ENCODE measurements at regions of chr12 and their contacts with region 1.

Region 1: GRCh38 chr12:49967042-49967776 is 5.5 kb downstream of the AQP5 start:
- DNase-seq: peak; percentile 87 to 97 (median 93)
- ATAC-seq: peak; percentile 85
- H3K4me3 ChIP-seq: peak overlapping the region; percentile 57
- H3K4me3 Mint-ChIP-seq: peak overlapping the region; percentile 70
- H3K27ac ChIP-seq: no peak overlapping the region
- H3K27ac Mint-ChIP-seq: no peak overlapping the region
- H3K4me1 ChIP-seq: peaks cover 17% of the 10 kb centered on the region
- H3K4me1 Mint-ChIP-seq: peaks cover 5% of the 10 kb centered on the region
- H3K27me3 ChIP-seq: peaks cover 22 to 46% of the 10 kb centered on the region in 2 experiments
- H3K27me3 Mint-ChIP-seq: peaks cover 47% of the 10 kb centered on the region
- CTCF ChIP-seq: peak; percentile 96

Region 2: DNA sequence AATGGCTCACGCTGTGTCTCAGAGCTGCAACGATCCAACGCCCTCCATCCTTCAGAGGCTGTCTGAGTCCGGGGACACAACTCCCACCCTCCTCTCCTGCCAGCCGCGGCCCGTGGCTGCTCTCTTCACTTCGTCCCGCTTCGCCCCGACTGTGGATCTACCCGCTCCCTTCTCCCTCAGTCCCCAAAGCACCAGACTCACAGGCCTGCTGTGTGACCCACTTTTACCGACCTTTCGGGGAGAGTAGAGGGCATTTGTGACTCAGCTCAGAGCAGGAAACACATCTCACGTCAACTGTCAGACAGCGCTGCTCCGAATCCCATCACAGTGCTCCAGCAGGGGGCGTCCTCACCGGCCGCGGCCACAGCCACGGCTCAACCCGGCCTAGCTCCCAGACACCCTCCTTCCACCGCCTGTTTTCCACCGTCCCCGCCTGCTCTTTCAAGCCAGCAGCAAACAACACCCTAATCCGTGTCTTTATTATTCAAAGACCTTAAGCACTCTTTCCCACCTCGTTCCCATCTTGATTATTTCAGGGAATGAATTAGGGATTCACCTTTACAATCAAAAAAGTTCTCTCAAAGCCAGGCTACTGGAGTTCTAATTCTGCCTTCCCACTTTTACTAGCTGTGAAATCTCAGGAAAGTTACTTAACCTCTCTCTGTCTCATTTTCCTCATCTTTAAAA is 21.7 kb before region 1 on chr12:
- CTCF ChIA-PET with region 1: interaction called, 32 read pairs
- POLR2A ChIA-PET with region 1: interaction called, 6 read pairs
- intact Hi-C with region 1: no loop called
- DNase-seq: peak; percentile 63 to 91 (median 78)
- ATAC-seq: peak; percentile 95
- H3K4me3 ChIP-seq: peak overlapping the region; percentile 47
- H3K4me3 Mint-ChIP-seq: peak overlapping the region; percentile 83
- H3K27ac ChIP-seq: peak overlapping the region in 1 of 2 donors; percentile 35
- H3K27ac Mint-ChIP-seq: peak overlapping the region; percentile 86
- H3K4me1 ChIP-seq: peaks cover 40% of the 10 kb centered on the region
- H3K4me1 Mint-ChIP-seq: peaks cover 30% of the 10 kb centered on the region
- H3K27me3 ChIP-seq: no peaks in the 10 kb centered on the region
- H3K27me3 Mint-ChIP-seq: peaks cover 5% of the 10 kb centered on the region
- CTCF ChIP-seq: peak; percentile 89

Region 3: DNA sequence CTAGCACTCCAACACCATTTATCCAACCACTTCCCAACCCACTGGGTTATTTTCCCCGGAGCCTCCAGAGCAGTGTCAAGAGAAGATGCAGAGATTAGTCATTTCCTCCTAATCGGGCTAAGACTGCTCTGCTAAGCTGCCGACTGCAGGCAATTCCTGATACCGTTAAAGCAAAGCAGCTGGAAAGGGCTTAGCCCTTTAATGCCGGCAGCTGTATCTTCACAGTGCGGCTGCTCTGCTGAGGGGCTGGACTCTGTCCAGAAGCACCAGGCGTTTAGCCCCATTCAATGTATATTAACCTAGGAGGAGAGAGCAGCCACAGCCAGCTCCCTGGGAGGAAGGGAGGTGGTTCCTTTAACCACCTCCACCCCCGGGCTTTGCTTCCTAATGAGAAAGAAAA is 16.7 kb after region 1 on chr12:
- CTCF ChIA-PET with region 1: interaction called, 14 read pairs
- POLR2A ChIA-PET with region 1: no interaction called
- intact Hi-C with region 1: no loop called
- DNase-seq: peak in 1 of 14 experiments; percentile 25
- ATAC-seq: no peak
- H3K4me3 ChIP-seq: no peak overlapping the region
- H3K4me3 Mint-ChIP-seq: no peak overlapping the region
- H3K27ac ChIP-seq: no peak overlapping the region
- H3K27ac Mint-ChIP-seq: no peak overlapping the region
- H3K4me1 ChIP-seq: no peaks in the 10 kb centered on the region
- H3K4me1 Mint-ChIP-seq: no peaks in the 10 kb centered on the region
- H3K27me3 ChIP-seq: no peaks in the 10 kb centered on the region
- H3K27me3 Mint-ChIP-seq: no peaks in the 10 kb centered on the region
- CTCF ChIP-seq: no peak

Region 4: DNA sequence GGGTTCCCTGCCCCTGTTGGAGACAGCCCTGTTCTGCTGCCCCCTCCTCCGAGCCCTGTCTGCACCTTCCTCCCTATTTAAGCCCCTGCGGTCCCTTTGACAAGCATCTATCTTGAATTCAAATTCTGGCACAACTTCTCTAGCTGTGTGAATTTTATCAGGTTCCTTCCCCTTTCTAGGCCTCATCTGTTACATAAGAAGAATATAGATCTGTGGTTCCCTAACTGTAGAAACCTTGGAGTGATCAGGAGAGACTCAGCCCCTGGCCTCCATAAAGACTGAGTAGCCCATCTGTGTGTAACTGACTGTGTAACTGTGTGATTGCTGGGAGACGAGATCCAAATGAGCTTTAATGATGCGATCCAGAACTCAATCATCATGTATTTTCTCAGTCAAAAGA is 71.1 kb after region 1 on chr12:
- CTCF ChIA-PET with region 1: interaction called, 10 read pairs
- POLR2A ChIA-PET with region 1: no interaction called
- intact Hi-C with region 1: no loop called
- DNase-seq: no peak
- ATAC-seq: no peak
- H3K4me3 ChIP-seq: no peak overlapping the region
- H3K4me3 Mint-ChIP-seq: no peak overlapping the region
- H3K27ac ChIP-seq: no peak overlapping the region
- H3K27ac Mint-ChIP-seq: no peak overlapping the region
- H3K4me1 ChIP-seq: no peaks in the 10 kb centered on the region
- H3K4me1 Mint-ChIP-seq: no peaks in the 10 kb centered on the region
- H3K27me3 ChIP-seq: peaks cover 0 to 3% of the 10 kb centered on the region in 2 experiments
- H3K27me3 Mint-ChIP-seq: peaks cover 23% of the 10 kb centered on the region
- CTCF ChIP-seq: no peak

Region 5: DNA sequence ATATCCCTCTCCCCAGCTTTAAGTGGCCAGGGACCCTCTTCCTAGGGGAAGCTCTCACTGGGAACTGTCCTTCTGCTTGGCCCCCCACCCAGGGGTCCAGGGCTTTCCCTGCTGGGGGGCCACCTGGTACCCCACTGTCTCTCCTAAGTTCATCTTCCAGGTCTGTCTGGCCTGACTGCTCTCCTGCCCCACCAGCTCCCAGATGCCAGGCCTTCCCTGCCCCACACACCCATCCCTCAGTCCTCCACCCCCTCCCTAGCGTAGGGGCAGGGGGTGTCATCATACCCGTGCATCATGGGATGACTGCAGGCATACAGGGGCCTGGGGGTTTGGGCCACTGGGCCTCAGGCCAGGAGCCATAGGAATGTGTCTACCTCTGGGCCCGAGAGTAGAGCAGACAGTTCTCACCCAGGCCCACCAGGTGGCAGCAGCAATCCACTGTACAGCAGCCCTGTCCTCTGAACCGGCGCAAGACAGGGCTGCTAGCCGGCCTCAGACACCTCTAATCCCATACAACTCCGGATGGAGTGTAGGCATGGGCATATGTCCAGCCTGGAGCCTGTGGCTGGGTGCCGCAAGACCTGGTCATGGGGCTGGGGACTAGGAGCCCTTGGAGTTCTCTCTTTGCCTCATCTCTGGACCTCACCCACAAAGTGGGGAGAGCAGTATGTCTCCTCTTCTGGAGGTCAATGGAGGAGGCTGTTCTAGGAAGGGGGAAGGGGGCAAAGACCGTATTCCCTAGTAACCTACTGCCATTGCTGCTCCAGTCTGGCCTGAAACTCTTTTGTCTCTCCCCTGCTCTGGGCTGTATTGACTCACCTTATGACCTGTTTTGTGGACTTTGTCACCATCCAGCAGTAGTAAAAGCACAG is 108.0 kb after region 1 on chr12:
- CTCF ChIA-PET with region 1: interaction called, 24 read pairs
- POLR2A ChIA-PET with region 1: no interaction called
- intact Hi-C with region 1: loop called (anchors 1 kb)
- DNase-seq: peak; percentile 63 to 88 (median 77)
- ATAC-seq: peak; percentile 95
- H3K4me3 ChIP-seq: no peak overlapping the region
- H3K4me3 Mint-ChIP-seq: no peak overlapping the region
- H3K27ac ChIP-seq: no peak overlapping the region
- H3K27ac Mint-ChIP-seq: no peak overlapping the region
- H3K4me1 ChIP-seq: peaks cover 13% of the 10 kb centered on the region
- H3K4me1 Mint-ChIP-seq: peaks cover 7% of the 10 kb centered on the region
- H3K27me3 ChIP-seq: no peaks in the 10 kb centered on the region
- H3K27me3 Mint-ChIP-seq: peaks cover 5% of the 10 kb centered on the region
- CTCF ChIP-seq: peak; percentile 82

Region 6: GRCh38 chr12:50257686-50258551 is 290.7 kb after region 1 on chr12:
- CTCF ChIA-PET with region 1: no interaction called
- POLR2A ChIA-PET with region 1: no interaction called
- intact Hi-C with region 1: no loop called
- DNase-seq: no peak
- ATAC-seq: no peak
- H3K4me3 ChIP-seq: no peak overlapping the region
- H3K4me3 Mint-ChIP-seq: no peak overlapping the region
- H3K27ac ChIP-seq: no peak overlapping the region
- H3K27ac Mint-ChIP-seq: no peak overlapping the region
- H3K4me1 ChIP-seq: no peaks in the 10 kb centered on the region
- H3K4me1 Mint-ChIP-seq: no peaks in the 10 kb centered on the region
- H3K27me3 ChIP-seq: no peaks in the 10 kb centered on the region
- H3K27me3 Mint-ChIP-seq: no peaks in the 10 kb centered on the region
- CTCF ChIP-seq: no peak

Region 7: GRCh38 chr12:50620109-50620977 is 653.1 kb after region 1 on chr12:
- CTCF ChIA-PET with region 1: no interaction called
- POLR2A ChIA-PET with region 1: no interaction called
- intact Hi-C with region 1: no loop called
- DNase-seq: peak in 1 of 14 experiments; percentile 29
- ATAC-seq: no peak
- H3K4me3 ChIP-seq: no peak overlapping the region
- H3K4me3 Mint-ChIP-seq: no peak overlapping the region
- H3K27ac ChIP-seq: no peak overlapping the region
- H3K27ac Mint-ChIP-seq: peak overlapping the region; percentile 73
- H3K4me1 ChIP-seq: peaks cover 38% of the 10 kb centered on the region
- H3K4me1 Mint-ChIP-seq: peaks cover 78% of the 10 kb centered on the region
- H3K27me3 ChIP-seq: no peaks in the 10 kb centered on the region
- H3K27me3 Mint-ChIP-seq: no peaks in the 10 kb centered on the region
- CTCF ChIP-seq: no peak

Measured in CD4-positive, alpha-beta T cell (primary cell).